Activated CD8-positive, alpha-beta memory T cell treated with anti-CD3 and anti-CD28 coated beads, Interleukin-2, amount 10 ng/mL, durations not matched to agents 7 days and 5 days (primary cell): ENCODE measurements at regions of chr3 and their contacts with region 1.

Region 1: GRCh38 chr3:58305882-58306711 is at the starts of genes HTD2 and RPP14:
- DNase-seq: peak; percentile 99
- ATAC-seq: peak; percentile 91
- H3K4me3 Mint-ChIP-seq: peak within 1 kb of the TSS; percentile 98
- H3K27ac Mint-ChIP-seq: peak within 1 kb of the TSS; percentile 99
- H3K4me1 Mint-ChIP-seq: peaks cover 32% of the 10 kb centered on the region
- H3K27me3 Mint-ChIP-seq: peaks cover 13% of the 10 kb centered on the region
- total RNA-seq, gene HTD2: 6.9 to 7.4 TPM
- total RNA-seq, gene RPP14: 12.9 to 16.9 TPM

Region 2: DNA sequence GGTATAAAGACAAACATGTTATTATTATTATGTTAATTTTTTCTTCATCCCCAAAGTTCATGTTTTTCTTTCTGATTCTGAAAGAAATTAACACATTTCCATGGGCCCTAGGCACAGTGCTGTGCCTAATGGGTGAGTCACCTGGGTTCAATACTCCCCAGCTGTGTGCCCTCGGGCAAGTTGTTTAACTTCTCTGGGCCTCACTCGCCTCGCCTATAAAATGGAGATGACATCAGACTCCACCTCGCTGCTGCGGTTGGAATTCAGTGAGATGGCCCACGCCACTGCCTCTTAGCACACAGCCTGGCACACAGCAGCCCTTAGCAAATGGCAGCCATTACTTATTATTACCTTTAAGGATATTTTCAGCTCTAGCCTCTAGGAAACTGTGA is 117.9 kb before region 1 on chr3:
- CTCF ChIA-PET with region 1: interaction called, 41 read pairs
- DNase-seq: no peak
- ATAC-seq: no peak
- H3K4me3 Mint-ChIP-seq: no peak overlapping the region
- H3K27ac Mint-ChIP-seq: no peak overlapping the region
- H3K4me1 Mint-ChIP-seq: no peaks in the 10 kb centered on the region
- H3K27me3 Mint-ChIP-seq: no peaks in the 10 kb centered on the region

Region 3: DNA sequence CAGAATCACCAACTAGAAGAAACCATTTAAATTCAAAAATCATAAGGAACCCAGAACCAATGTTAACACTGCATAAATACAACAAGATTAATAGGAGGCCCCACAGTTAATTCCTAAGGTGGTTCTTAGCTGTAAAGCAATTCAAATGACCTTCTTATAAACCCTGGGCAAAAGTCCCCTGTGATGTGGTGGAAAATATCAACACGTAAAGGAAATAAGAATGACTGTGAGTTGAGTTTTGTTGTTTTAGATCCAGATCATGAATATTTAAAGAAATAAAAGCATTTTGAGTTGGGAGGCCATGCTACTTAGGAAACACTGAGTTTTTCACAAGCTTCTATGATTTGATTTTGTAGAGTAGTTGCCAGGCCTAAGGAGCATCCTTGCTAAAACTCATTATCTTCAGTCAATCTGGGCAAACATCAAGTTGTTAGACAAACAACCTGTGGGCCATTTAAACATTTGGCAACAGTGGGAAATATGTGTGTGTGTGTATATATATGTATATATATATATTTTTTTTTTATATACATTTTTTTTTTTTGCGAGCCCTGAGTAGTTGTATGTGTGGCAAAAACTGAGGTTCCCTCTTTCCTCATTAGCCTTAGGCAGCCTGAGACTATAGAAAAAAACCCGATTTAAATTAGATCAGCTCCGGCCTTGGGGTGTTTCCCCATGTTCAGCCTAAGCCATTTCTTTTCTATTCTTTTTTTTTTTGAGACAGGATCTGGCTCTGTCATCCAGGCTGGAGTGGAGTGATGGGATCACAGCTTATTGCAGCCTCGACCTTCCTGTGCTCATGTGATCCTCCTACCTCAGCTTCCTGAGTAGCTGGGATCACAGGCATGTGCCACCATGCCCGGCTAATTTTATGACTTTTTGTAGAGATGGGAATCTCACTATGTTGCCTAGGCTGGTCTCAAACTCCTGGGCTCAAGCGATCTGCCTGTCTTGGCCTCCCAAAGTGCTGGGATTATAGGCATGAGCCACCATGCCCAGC is 18.6 kb after region 1 on chr3:
- CTCF ChIA-PET with region 1: interaction called, 54 read pairs
- DNase-seq: no peak
- ATAC-seq: peak; percentile 52
- H3K4me3 Mint-ChIP-seq: no peak overlapping the region
- H3K27ac Mint-ChIP-seq: peak overlapping the region; percentile 66
- H3K4me1 Mint-ChIP-seq: peaks cover 29% of the 10 kb centered on the region
- H3K27me3 Mint-ChIP-seq: no peaks in the 10 kb centered on the region

Region 4: DNA sequence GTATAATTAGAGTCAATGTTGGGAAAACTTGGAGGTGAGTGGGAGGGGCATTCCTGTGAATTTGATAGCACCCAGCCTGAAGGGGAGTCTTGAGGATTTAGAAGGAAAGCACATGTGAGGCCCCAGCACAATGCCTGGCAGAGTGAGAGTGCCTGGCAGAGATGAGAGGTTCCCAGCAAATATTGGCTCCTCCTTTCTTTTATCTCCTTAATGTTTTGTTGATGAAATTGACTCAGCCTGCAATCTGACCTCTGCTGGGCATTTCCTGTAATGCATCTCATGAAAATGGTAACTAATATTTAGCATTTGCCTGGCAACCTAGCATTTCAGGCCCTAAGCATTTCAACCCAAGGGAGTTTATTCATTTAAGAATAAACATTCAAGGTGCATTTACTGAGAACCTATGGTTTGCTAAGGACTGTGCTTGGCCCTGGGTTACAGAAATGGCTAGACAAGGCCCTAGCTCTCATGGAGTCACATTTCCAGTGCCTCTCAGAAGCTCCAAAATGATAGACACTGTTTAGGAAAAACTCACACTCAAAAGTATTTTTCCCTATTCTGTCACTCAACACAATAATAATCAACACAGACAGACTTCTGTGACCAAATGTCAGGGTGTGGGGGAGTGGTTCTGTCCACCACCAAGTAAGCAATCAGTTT is 108.6 kb after region 1 on chr3:
- CTCF ChIA-PET with region 1: interaction called, 22 read pairs
- DNase-seq: peak; percentile 68
- ATAC-seq: peak; percentile 78
- H3K4me3 Mint-ChIP-seq: no peak overlapping the region
- H3K27ac Mint-ChIP-seq: no peak overlapping the region
- H3K4me1 Mint-ChIP-seq: peaks cover 13% of the 10 kb centered on the region
- H3K27me3 Mint-ChIP-seq: no peaks in the 10 kb centered on the region

Region 5: GRCh38 chr3:58471025-58471887 is 165.2 kb after region 1 on chr3:
- CTCF ChIA-PET with region 1: interaction called, 23 read pairs
- DNase-seq: peak; percentile 88
- ATAC-seq: peak; percentile 98
- H3K4me3 Mint-ChIP-seq: no peak overlapping the region
- H3K27ac Mint-ChIP-seq: peak overlapping the region; percentile 83
- H3K4me1 Mint-ChIP-seq: peaks cover 52% of the 10 kb centered on the region
- H3K27me3 Mint-ChIP-seq: peaks cover 15% of the 10 kb centered on the region

Region 6: DNA sequence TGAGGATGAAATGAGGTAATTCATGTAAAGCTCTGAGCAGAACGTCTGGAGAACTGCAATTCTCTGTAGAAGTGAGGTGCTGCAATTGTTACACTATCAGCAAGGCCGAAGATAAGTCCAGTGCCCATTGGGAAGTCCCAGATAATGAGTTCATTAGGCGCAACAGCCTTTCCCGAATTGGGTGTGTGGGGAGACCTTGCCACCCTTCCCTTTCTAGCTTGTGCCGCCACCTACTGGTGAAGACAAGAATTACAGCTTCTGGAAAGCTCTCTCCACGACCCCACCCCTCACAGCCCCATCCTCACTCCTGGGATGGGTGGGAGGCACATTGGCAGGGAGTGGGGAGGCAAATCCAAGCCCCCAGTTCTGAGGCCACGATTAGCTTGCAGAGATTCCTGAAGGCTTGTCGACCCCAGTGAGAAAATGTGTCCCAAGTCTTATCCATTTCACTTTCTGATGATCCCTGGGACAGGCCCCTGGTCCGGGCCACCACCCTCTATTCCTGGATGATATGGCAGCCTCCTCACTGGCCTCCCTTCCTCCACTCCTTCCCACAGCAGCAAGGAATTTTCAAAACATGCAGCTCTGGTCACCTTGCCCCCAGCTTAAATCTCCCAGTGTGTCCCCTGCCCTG is 324.1 kb after region 1 on chr3:
- CTCF ChIA-PET with region 1: interaction called, 37 read pairs
- DNase-seq: peak; percentile 71
- ATAC-seq: peak; percentile 45
- H3K4me3 Mint-ChIP-seq: no peak overlapping the region
- H3K27ac Mint-ChIP-seq: no peak overlapping the region
- H3K4me1 Mint-ChIP-seq: peaks cover 4% of the 10 kb centered on the region
- H3K27me3 Mint-ChIP-seq: peaks cover 3% of the 10 kb centered on the region